Activated T-helper 2 cell treated with anti-CD3 and anti-CD28 coated beads, Interferon-gamma antibody, Interleukin-2, Interleukin-4, amounts not matched to agents 10 μg/mL and 5 μg/mL and 100 μg/mL, durations not matched to agents 14 hours and 24 hours and 36 hours (primary cell): ENCODE measurements at regions of chr2 and their contacts with region 1.

Region 1: GRCh38 chr2:212915121-212915782 is 236.2 kb downstream of the IKZF2 start:
- DNase-seq: no peak
- H3K4me3 Mint-ChIP-seq: peak overlapping the region; percentile 11
- H3K27ac Mint-ChIP-seq: peak overlapping the region; percentile 54
- H3K4me1 Mint-ChIP-seq: peaks cover 30% of the 10 kb centered on the region
- H3K27me3 Mint-ChIP-seq: peaks cover 6% of the 10 kb centered on the region

Region 2: GRCh38 chr2:212958757-212959295 is 43.6 kb after region 1 on chr2:
- intact Hi-C with region 1: loop called (anchors 1 kb)
- DNase-seq: no peak
- H3K4me3 Mint-ChIP-seq: peak overlapping the region; percentile 19
- H3K27ac Mint-ChIP-seq: peak overlapping the region; percentile 75
- H3K4me1 Mint-ChIP-seq: peaks cover 46% of the 10 kb centered on the region
- H3K27me3 Mint-ChIP-seq: no peaks in the 10 kb centered on the region

Region 3: DNA sequence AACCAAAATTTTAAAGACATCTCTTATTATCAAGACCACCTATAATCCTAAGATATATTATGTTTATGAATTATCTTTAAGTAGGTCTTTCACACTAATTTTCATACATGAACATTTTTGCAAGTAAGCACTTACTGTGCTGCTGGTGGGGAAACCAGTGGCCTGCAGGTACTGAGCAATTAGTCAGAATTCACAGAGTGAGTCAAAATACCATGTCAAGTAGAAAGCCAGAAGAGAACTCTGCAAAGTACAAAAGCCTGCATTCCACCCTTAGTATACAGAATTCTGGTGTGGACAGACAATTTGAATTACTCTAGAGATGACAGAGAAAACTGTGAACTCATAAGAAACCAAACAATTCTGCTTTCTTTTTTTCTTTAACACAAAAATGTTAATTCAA is 53.0 kb after region 1 on chr2:
- intact Hi-C with region 1: loop called (anchors 2 kb)
- DNase-seq: no peak
- H3K4me3 Mint-ChIP-seq: no peak overlapping the region
- H3K27ac Mint-ChIP-seq: peak overlapping the region; percentile 78
- H3K4me1 Mint-ChIP-seq: peaks cover 31% of the 10 kb centered on the region
- H3K27me3 Mint-ChIP-seq: peaks cover 2% of the 10 kb centered on the region